PC-9 (cell line): ENCODE measurements at regions of chr5 and their contacts with region 1.

Region 1: GRCh38 chr5:88724201-88724600 is 158.8 kb downstream of the MEF2C start:
- DNase-seq: peak in 1 of 2 experiments; percentile 35
- H3K4me3 ChIP-seq: no peak overlapping the region
- H3K27ac ChIP-seq: no peak overlapping the region
- H3K4me1 ChIP-seq: no peaks in the 10 kb centered on the region
- H3K27me3 ChIP-seq: no peaks in the 10 kb centered on the region
- CTCF ChIP-seq: peak; percentile 71

Region 2: DNA sequence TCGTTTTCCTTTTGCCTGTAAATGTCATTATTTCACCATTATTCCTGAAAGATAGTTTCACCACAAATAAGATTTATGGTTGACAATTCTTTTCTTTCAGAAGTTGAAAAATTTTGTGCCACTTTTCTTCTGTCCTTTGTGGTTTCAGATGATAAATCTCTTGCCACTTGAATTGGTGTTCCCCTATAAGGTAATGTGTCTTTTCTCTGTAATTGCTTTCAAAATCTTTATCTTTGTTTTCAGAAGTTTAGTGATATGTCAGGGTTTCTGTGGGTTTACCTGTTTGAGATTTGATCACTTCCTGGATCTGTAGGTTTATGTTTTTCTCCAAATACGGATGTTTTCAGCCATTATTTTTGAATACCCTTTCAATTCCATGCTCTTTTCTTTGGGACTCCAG is 1441.9 kb before region 1 on chr5:
- CTCF ChIA-PET with region 1: interaction called, 11 read pairs
- POLR2A ChIA-PET with region 1: no interaction called
- intact Hi-C with region 1: no loop called
- DNase-seq: no peak
- H3K4me3 ChIP-seq: no peak overlapping the region
- H3K27ac ChIP-seq: no peak overlapping the region
- H3K4me1 ChIP-seq: no peaks in the 10 kb centered on the region
- H3K27me3 ChIP-seq: no peaks in the 10 kb centered on the region
- CTCF ChIP-seq: no peak

Region 3: GRCh38 chr5:87421307-87421706 is 1302.9 kb before region 1 on chr5:
- CTCF ChIA-PET with region 1: no interaction called
- POLR2A ChIA-PET with region 1: interaction called, 7 read pairs
- intact Hi-C with region 1: loop called (anchors 5 kb)
- DNase-seq: no peak
- H3K4me3 ChIP-seq: no peak overlapping the region
- H3K27ac ChIP-seq: no peak overlapping the region
- H3K4me1 ChIP-seq: no peaks in the 10 kb centered on the region
- H3K27me3 ChIP-seq: no peaks in the 10 kb centered on the region
- CTCF ChIP-seq: no peak

Region 4: GRCh38 chr5:88436290-88436689 is 287.9 kb before region 1 on chr5:
- CTCF ChIA-PET with region 1: no interaction called
- POLR2A ChIA-PET with region 1: no interaction called
- intact Hi-C with region 1: no loop called
- DNase-seq: no peak
- H3K4me3 ChIP-seq: no peak overlapping the region
- H3K27ac ChIP-seq: no peak overlapping the region
- H3K4me1 ChIP-seq: peaks cover 29% of the 10 kb centered on the region
- H3K27me3 ChIP-seq: no peaks in the 10 kb centered on the region
- CTCF ChIP-seq: no peak

Region 5: GRCh38 chr5:88602584-88602983 is 121.6 kb before region 1 on chr5:
- CTCF ChIA-PET with region 1: no interaction called
- POLR2A ChIA-PET with region 1: no interaction called
- intact Hi-C with region 1: no loop called
- DNase-seq: peak in 1 of 2 experiments; percentile 14
- H3K4me3 ChIP-seq: no peak overlapping the region
- H3K27ac ChIP-seq: no peak overlapping the region
- H3K4me1 ChIP-seq: no peaks in the 10 kb centered on the region
- H3K27me3 ChIP-seq: no peaks in the 10 kb centered on the region
- CTCF ChIP-seq: peak; percentile 76

Region 6: DNA sequence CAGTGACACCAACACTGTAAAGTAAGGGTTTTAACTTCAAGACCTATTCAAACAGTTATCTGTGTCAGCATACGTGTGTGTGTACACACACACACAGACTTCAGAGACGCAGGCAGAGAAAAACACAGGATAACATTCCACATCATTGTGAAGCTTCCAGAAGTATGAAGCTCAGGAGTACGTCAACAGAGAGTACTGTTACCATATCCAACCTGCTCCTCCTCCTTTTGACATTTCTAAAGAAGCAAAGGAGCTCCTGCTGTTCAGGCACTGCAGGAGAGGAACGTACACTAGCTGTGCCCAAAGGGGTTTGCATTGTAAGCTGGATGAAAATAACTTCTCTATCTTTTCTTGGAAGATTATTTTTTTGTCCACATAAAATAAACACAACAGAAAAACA is 21.9 kb before region 1 on chr5:
- CTCF ChIA-PET with region 1: interaction called, 3 read pairs
- POLR2A ChIA-PET with region 1: interaction called, 12 read pairs
- intact Hi-C with region 1: no loop called
- DNase-seq: no peak
- H3K4me3 ChIP-seq: no peak overlapping the region
- H3K27ac ChIP-seq: no peak overlapping the region
- H3K4me1 ChIP-seq: no peaks in the 10 kb centered on the region
- H3K27me3 ChIP-seq: no peaks in the 10 kb centered on the region
- CTCF ChIP-seq: no peak

Region 7: GRCh38 chr5:88826646-88827585 is 102.7 kb after region 1 on chr5:
- CTCF ChIA-PET with region 1: no interaction called
- POLR2A ChIA-PET with region 1: no interaction called
- intact Hi-C with region 1: no loop called
- DNase-seq: no peak
- H3K4me3 ChIP-seq: no peak overlapping the region
- H3K27ac ChIP-seq: no peak overlapping the region
- H3K4me1 ChIP-seq: no peaks in the 10 kb centered on the region
- H3K27me3 ChIP-seq: no peaks in the 10 kb centered on the region
- CTCF ChIP-seq: no peak

Region 8: GRCh38 chr5:89003563-89004036 is 279.4 kb after region 1 on chr5:
- CTCF ChIA-PET with region 1: no interaction called
- POLR2A ChIA-PET with region 1: no interaction called
- intact Hi-C with region 1: no loop called
- DNase-seq: no peak
- H3K4me3 ChIP-seq: no peak overlapping the region
- H3K27ac ChIP-seq: no peak overlapping the region
- H3K4me1 ChIP-seq: no peaks in the 10 kb centered on the region
- H3K27me3 ChIP-seq: no peaks in the 10 kb centered on the region
- CTCF ChIP-seq: no peak